ENCODE measurements at regions of chr15 and their contacts with region 1.

Region 1: DNA sequence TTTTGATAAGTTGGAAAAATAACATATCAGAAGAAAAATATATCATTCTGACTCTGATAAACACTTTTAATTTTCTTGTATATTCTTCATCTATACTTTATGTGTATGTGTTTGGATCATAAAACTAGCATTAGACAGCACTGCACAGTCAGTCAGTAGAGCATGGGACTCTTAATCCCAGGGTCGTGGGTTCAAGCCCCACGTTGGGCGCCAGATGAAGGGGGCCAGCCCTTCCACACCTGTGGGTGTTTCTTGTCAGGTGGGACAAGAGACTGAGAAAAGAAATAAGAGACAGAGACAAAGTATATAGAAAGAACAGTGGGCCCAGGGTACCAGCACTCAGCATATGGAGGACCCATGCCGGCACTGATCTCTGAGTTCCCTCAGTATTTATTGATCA is 546.0 kb upstream of the NR2F2 start:
- DNase-seq: no peak
- ATAC-seq: no peak
- H3K4me3 ChIP-seq: no peak overlapping the region
- H3K4me3 Mint-ChIP-seq: no peak overlapping the region
- H3K27ac ChIP-seq: no peak overlapping the region
- H3K27ac Mint-ChIP-seq: no peak overlapping the region
- H3K4me1 ChIP-seq: no peaks in the 10 kb centered on the region
- H3K4me1 Mint-ChIP-seq: no peaks in the 10 kb centered on the region
- H3K27me3 ChIP-seq: peaks cover 0 to 2% of the 10 kb centered on the region in 2 experiments
- H3K27me3 Mint-ChIP-seq: no peaks in the 10 kb centered on the region
- CTCF ChIP-seq: no peak

Region 2: DNA sequence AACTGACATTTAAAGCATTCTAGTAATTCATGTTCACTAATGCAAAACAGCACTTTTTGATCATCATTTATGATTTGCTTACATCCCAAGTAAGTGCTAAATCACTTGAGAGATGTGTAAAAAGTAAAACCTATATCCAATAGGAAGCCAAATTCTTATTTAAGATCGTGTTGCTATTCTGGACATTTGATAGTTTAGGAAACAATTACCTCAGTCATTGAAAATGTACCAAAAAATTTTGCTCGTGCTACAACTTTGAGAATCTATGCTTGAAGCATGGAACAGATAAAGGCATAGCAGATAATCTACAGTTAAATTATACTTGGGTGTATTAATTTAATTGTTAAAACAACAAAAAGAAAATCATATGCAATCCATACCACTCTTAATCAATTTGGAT is 25.7 kb before region 1 on chr15:
- CTCF ChIA-PET with region 1: no interaction called
- POLR2A ChIA-PET with region 1: no interaction called
- intact Hi-C with region 1: loop called in 1 of 2 experiments (anchors 1 kb)
- DNase-seq: no peak
- ATAC-seq: no peak
- H3K4me3 ChIP-seq: no peak overlapping the region
- H3K4me3 Mint-ChIP-seq: no peak overlapping the region
- H3K27ac ChIP-seq: no peak overlapping the region
- H3K27ac Mint-ChIP-seq: no peak overlapping the region
- H3K4me1 ChIP-seq: no peaks in the 10 kb centered on the region
- H3K4me1 Mint-ChIP-seq: no peaks in the 10 kb centered on the region
- H3K27me3 ChIP-seq: no peaks in the 10 kb centered on the region
- H3K27me3 Mint-ChIP-seq: peaks cover 6% of the 10 kb centered on the region
- CTCF ChIP-seq: no peak

Region 3: GRCh38 chr15:95770191-95770590 is 14.3 kb before region 1 on chr15:
- CTCF ChIA-PET with region 1: no interaction called
- POLR2A ChIA-PET with region 1: no interaction called
- intact Hi-C with region 1: no loop called
- DNase-seq: no peak
- ATAC-seq: no peak
- H3K4me3 ChIP-seq: no peak overlapping the region
- H3K4me3 Mint-ChIP-seq: no peak overlapping the region
- H3K27ac ChIP-seq: no peak overlapping the region
- H3K27ac Mint-ChIP-seq: no peak overlapping the region
- H3K4me1 ChIP-seq: no peaks in the 10 kb centered on the region
- H3K4me1 Mint-ChIP-seq: no peaks in the 10 kb centered on the region
- H3K27me3 ChIP-seq: no peaks in the 10 kb centered on the region
- H3K27me3 Mint-ChIP-seq: no peaks in the 10 kb centered on the region
- CTCF ChIP-seq: no peak

Region 4: DNA sequence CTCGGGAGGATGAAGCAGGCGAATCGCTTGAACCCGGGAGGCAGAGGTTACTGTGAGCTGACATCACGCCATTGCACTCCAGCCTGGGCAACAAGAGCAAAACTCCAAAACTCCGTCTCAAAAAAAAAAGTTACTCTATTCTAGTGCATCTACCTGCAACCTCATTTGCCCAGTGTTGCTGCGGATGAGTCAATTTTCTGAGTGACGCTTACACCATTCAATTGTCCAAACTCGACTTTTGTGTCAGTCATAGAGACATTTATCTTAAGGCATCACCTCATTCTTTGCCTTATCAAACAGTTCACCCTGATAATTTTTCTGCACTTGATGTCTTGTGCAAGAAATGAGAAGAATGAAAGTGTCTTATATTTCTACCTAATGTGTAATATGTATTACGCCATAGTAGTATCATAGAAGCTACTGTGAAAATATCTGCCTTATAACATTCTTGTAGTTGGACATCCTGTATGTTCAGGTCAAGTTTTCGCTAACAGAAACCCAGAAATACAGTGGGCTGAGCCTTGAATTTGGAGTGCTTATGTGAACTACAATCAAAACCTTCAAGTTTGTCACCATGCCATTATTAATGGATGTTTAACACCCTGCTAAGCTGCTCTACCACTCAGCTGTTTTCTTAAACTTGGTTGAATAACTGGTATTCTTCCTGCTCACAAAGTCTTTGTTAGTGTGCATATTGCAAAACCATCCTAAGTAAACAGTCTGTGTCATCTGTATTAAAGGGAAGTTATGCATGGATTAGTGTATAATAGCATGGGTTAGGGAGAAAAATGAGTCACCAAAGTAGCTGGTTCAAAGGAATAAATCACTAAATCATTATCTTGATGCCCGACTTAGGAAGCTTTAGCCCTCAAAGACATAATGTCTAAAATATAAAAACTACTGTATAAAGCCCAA is 15.0 kb after region 1 on chr15:
- CTCF ChIA-PET with region 1: no interaction called
- POLR2A ChIA-PET with region 1: no interaction called
- intact Hi-C with region 1: no loop called
- DNase-seq: no peak
- ATAC-seq: no peak
- H3K4me3 ChIP-seq: no peak overlapping the region
- H3K4me3 Mint-ChIP-seq: no peak overlapping the region
- H3K27ac ChIP-seq: no peak overlapping the region
- H3K27ac Mint-ChIP-seq: no peak overlapping the region
- H3K4me1 ChIP-seq: no peaks in the 10 kb centered on the region
- H3K4me1 Mint-ChIP-seq: peaks cover 2% of the 10 kb centered on the region
- H3K27me3 ChIP-seq: no peaks in the 10 kb centered on the region
- H3K27me3 Mint-ChIP-seq: no peaks in the 10 kb centered on the region
- CTCF ChIP-seq: no peak

Region 5: DNA sequence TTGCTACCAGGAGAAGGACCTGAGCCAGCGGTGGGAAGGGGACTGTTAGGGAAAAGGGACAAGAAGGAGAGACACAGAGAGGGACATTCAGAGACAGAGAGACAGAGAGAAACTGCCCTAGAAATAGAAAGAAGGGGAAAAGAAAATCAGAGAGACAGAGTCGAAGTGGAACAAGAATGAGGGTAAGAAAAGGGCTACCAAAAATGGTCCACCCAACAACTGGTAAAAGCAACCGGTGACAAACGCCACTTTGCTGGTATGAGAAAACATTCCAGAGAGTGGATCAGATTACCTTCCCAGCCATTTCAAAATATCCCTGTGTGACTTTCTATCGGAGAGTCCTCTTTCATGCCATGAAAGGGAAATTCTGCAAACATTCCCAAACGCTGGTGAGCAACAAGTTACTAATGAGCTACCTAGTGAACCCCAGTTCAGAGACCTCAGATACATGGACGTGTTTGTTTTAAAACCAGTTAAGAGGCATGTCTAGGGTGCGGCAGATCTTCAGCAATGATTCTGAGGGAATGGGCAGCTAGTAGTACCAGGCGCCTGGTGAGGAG is 127.6 kb after region 1 on chr15:
- CTCF ChIA-PET with region 1: no interaction called
- POLR2A ChIA-PET with region 1: no interaction called
- intact Hi-C with region 1: no loop called
- DNase-seq: no peak
- ATAC-seq: no peak
- H3K4me3 ChIP-seq: no peak overlapping the region
- H3K4me3 Mint-ChIP-seq: no peak overlapping the region
- H3K27ac ChIP-seq: no peak overlapping the region
- H3K27ac Mint-ChIP-seq: no peak overlapping the region
- H3K4me1 ChIP-seq: no peaks in the 10 kb centered on the region
- H3K4me1 Mint-ChIP-seq: no peaks in the 10 kb centered on the region
- H3K27me3 ChIP-seq: no peaks in the 10 kb centered on the region
- H3K27me3 Mint-ChIP-seq: no peaks in the 10 kb centered on the region
- CTCF ChIP-seq: no peak